T-cell (primary cell): ENCODE measurements at regions of chrX and their contacts with region 1.

Region 1: GRCh38 chrX:12999422-12999821 is 24.5 kb downstream of the TMSB4X start:
- DNase-seq: peak in 25 of 35 experiments; percentile 14 to 70 (median 36)
- ATAC-seq: peak; percentile 57 to 82 (median 62)
- H3K4me3 ChIP-seq: peak overlapping the region; percentile 24 to 47
- H3K4me3 Mint-ChIP-seq: peak overlapping the region; percentile 64 to 74 (median 71)
- H3K27ac ChIP-seq: peak overlapping the region; percentile 94
- H3K27ac Mint-ChIP-seq: peak overlapping the region; percentile 83 to 98
- H3K4me1 ChIP-seq: peaks cover 44 to 53% of the 10 kb centered on the region in 2 experiments
- H3K4me1 Mint-ChIP-seq: peaks cover 60 to 76% (median 70%) of the 10 kb centered on the region in 3 donors
- H3K27me3 ChIP-seq: no peaks in the 10 kb centered on the region
- H3K27me3 Mint-ChIP-seq: peaks cover 0 to 10% of the 10 kb centered on the region in 2 donors

Region 2: DNA sequence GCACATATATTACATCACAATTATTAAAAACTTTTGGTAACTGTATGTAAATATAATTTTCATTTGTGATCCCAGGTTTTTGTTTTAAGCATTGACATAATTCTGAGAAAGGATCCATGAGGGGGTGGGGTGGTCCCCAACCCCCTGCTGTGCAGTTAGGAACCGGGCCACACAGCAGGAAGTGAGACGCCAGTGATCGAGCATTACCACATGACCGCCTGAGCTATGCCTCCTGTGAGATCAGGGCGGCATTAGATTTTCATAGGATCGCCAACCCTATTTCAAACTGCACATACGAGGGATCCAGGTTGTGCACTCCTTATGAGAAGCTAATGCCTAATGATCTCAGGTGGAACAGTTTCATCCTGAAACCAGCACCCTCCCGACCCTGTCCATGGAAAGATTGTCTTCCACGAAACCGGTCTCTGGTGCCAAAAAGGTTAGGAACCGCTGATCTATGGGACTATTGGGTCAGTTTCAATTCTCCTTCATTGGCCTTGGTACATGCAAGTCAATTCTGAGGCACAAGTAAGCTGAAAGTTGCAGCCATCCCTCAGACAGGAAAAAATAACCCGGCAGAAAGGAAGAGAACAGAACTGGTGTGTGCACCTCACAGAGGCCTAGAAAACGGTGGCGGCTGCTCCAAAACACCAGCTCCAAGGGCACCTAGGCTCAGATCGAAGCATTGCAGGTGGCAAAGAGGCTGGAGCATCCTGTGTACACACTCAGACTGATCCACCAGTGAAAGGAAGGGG is 31.5 kb before region 1 on chrX:
- CTCF ChIA-PET with region 1: interaction called in 1 of 2 experiments, 4 read pairs
- POLR2A ChIA-PET with region 1: interaction called, 3 to 14 read pairs
- DNase-seq: peak in 2 of 35 experiments; percentile 41 to 63
- ATAC-seq: peak in 3 of 4 experiments; percentile 57 to 60 (median 58)
- H3K4me3 ChIP-seq: peak overlapping the region in 1 of 2 donors; percentile 17
- H3K4me3 Mint-ChIP-seq: peak overlapping the region; percentile 66 to 80 (median 74)
- H3K27ac ChIP-seq: peak overlapping the region; percentile 92
- H3K27ac Mint-ChIP-seq: peak overlapping the region; percentile 97 to 99
- H3K4me1 ChIP-seq: peaks cover 20 to 51% of the 10 kb centered on the region in 2 experiments
- H3K4me1 Mint-ChIP-seq: peaks cover 50 to 61% (median 57%) of the 10 kb centered on the region in 3 donors
- H3K27me3 ChIP-seq: no peaks in the 10 kb centered on the region
- H3K27me3 Mint-ChIP-seq: peaks cover 0 to 17% of the 10 kb centered on the region in 2 donors

Region 3: DNA sequence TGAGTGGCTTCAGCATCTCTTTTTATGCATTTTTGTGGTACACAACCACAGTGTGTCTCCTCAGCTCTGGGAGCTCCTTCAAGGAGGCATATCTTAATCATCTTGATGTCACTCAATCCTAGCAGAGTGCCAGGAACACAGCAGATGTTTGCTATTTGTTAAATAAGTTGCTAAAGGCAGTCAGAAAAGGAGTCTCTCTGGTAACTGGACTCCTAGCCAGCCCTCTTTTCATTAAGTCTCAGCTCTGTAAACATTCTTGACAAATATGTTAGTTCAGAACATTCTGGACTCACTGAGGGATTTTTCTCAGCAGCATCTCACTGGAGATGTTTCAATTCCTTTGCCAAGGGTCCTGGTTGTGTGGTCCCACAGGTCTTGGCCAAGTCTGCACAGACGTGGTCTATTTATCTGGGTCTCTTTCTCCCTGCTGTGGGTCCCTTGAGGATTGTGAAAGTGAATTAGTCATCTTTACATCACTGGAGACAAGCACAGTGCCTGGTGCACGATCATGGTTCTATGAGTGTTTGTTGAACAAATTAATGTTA is 65.2 kb after region 1 on chrX:
- CTCF ChIA-PET with region 1: no interaction called
- POLR2A ChIA-PET with region 1: no interaction called
- DNase-seq: no peak
- ATAC-seq: no peak
- H3K4me3 ChIP-seq: no peak overlapping the region
- H3K4me3 Mint-ChIP-seq: no peak overlapping the region
- H3K27ac ChIP-seq: no peak overlapping the region
- H3K27ac Mint-ChIP-seq: peak overlapping the region in 1 of 2 donors; percentile 28
- H3K4me1 ChIP-seq: peaks cover 2 to 17% of the 10 kb centered on the region in 2 experiments
- H3K4me1 Mint-ChIP-seq: peaks cover 32 to 49% (median 39%) of the 10 kb centered on the region in 3 donors
- H3K27me3 ChIP-seq: no peaks in the 10 kb centered on the region
- H3K27me3 Mint-ChIP-seq: peaks cover 0 to 14% of the 10 kb centered on the region in 2 donors

Region 4: DNA sequence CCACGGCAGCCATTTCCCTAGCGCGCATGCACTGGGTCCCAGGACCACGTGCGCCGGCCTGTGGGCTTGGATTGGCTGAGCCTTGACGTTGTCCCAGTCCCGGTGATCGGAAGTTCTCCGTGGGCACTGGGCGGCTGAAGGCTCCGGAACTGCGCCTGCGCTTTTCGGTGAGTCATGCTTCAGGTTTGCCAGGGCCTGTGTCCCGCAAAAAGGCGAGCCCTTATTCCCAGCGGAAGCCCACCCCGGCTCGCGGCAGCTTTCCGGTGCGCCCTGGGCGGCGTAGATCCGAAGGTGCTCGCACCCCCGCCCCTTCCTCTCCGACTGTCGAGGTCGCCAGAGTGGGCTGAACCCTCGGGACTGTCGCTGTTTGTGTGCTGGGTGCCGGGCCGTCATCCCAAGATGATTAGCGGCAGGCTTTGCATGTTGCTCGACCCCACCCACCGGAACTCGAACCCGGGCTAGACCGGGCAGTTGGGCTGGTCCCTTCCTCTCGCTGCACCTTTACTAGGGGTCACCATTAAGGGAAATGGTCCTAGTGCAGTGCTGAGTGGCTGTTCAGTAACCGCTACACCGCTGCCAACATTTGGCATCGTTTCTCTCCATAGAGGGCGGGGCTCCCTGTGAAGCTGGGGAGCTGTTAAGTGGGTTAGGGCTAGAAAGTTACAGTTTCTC is 653.7 kb after region 1 on chrX and contains the start of gene TCEANC:
- CTCF ChIA-PET with region 1: no interaction called
- POLR2A ChIA-PET with region 1: no interaction called
- DNase-seq: peak; percentile 87 to 98 (median 92)
- ATAC-seq: peak; percentile 96 to 98 (median 96)
- H3K4me3 ChIP-seq: peak within 1 kb of the TSS; percentile 71 to 90
- H3K4me3 Mint-ChIP-seq: peak within 1 kb of the TSS; percentile 86 to 94 (median 91)
- H3K27ac ChIP-seq: peak within 1 kb of the TSS; percentile 97
- H3K27ac Mint-ChIP-seq: peak within 1 kb of the TSS; percentile 93 to 97
- H3K4me1 ChIP-seq: peaks cover 6% of the 10 kb centered on the region in 2 experiments
- H3K4me1 Mint-ChIP-seq: peaks cover 27 to 37% (median 30%) of the 10 kb centered on the region in 3 donors
- H3K27me3 ChIP-seq: no peaks in the 10 kb centered on the region
- H3K27me3 Mint-ChIP-seq: peaks cover 0 to 11% of the 10 kb centered on the region in 2 donors
- total RNA-seq, gene TCEANC: 8.0 to 12.8 (median 9.5) TPM